Ovary (tissue), 10 donors: ENCODE measurements at regions of chr3 and their contacts with region 1.

Region 1: DNA sequence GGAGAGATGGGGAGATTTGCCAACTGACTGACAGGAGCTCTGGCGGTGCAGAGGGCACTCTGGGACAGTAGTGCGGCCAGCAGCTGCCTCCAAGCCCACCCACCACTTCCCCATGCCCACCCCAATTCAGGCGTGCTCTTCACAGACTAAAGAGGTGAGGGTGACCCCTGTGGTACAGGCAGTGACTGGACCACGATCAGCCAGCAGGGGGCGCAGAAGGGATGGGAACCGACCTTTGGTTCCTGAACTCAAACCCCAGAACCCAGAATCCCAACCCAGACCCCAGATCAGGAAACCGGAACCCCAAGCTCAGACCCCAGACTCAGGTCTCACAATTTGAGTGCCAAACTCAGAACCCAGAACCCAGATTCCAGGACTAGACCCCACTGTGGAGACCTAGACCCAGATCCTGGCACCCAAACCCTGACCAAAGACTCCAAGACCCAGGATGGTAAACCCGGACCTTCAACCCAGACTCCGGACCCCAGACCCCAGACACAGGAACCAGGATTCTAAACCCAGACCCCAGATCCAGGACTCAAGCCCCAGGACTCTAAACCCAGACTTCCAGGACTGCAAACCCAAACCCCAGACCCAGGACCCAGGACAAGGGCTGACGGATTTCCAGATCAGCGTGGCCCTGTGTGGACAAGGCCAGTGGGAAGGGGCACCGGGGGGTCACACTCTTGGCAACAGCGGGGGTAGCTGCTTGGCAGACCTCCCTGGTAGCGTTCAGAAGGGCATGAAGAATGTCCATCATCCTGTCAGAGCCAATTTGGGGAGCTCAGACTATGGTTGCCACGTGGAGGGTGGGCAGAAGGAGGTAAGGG is 3.7 kb upstream of the MYL3 start:
- DNase-seq: peak; percentile 82 to 93 (median 90)
- H3K4me3 ChIP-seq: no peak overlapping the region
- H3K27ac ChIP-seq: peak overlapping the region; percentile 66 to 73
- H3K4me1 ChIP-seq: peaks cover 31% of the 10 kb centered on the region
- H3K27me3 ChIP-seq: no peaks in the 10 kb centered on the region
- CTCF ChIP-seq: peak; percentile 81 to 91 (median 85)
- EP300 ChIP-seq: no peak
- POLR2A ChIP-seq: no peak

Region 2: GRCh38 chr3:46895204-46895660 is 28.3 kb after region 1 on chr3:
- intact Hi-C with region 1: loop called in 2 of 4 experiments (anchors 1 to 5 kb)
- DNase-seq: peak; percentile 76 to 89 (median 85)
- H3K4me3 ChIP-seq: no peak overlapping the region
- H3K27ac ChIP-seq: no peak overlapping the region
- H3K4me1 ChIP-seq: peaks cover 7% of the 10 kb centered on the region
- H3K27me3 ChIP-seq: no peaks in the 10 kb centered on the region
- CTCF ChIP-seq: peak; percentile 74 to 94 (median 92)
- EP300 ChIP-seq: no peak
- POLR2A ChIP-seq: no peak

Region 3: DNA sequence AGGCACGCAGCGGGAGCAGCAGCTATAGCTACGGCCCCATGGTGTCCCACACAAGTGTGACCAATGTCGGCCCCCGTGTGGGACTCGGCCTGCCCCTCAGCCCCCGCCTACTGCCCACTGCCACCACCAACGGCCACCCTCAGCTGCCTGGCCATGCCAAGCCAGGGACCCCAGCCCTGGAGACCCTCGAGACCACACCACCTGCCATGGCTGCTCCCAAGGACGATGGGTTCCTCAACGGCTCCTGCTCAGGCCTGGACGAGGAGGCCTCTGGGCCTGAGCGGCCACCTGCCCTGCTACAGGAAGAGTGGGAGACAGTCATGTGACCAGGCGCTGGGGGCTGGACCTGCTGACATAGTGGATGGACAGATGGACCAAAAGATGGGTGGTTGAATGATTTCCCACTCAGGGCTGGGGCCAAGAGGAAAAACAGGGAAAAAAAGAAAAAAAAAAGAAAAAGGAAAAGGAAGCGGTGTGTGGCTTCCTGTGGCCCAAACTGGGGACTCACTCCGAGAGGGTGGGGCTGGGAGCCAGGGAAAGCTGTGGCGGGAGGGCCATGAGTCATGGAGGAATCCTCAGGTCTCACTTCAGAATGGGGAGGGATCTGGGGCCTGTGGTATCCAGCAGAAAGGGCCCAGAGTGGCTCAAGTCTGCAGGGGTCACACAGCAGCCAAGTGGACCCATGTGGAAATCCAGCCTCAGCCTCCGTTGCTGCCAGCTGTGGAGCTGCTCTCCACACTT is 36.6 kb after region 1 on chr3:
- intact Hi-C with region 1: loop called in 2 of 4 experiments (anchors 5 kb)
- DNase-seq: peak in 2 of 5 donors; percentile 25 to 36
- H3K4me3 ChIP-seq: no peak overlapping the region
- H3K27ac ChIP-seq: no peak overlapping the region
- H3K4me1 ChIP-seq: peaks cover 5% of the 10 kb centered on the region
- H3K27me3 ChIP-seq: no peaks in the 10 kb centered on the region
- CTCF ChIP-seq: no peak
- EP300 ChIP-seq: no peak
- POLR2A ChIP-seq: no peak

Region 4: DNA sequence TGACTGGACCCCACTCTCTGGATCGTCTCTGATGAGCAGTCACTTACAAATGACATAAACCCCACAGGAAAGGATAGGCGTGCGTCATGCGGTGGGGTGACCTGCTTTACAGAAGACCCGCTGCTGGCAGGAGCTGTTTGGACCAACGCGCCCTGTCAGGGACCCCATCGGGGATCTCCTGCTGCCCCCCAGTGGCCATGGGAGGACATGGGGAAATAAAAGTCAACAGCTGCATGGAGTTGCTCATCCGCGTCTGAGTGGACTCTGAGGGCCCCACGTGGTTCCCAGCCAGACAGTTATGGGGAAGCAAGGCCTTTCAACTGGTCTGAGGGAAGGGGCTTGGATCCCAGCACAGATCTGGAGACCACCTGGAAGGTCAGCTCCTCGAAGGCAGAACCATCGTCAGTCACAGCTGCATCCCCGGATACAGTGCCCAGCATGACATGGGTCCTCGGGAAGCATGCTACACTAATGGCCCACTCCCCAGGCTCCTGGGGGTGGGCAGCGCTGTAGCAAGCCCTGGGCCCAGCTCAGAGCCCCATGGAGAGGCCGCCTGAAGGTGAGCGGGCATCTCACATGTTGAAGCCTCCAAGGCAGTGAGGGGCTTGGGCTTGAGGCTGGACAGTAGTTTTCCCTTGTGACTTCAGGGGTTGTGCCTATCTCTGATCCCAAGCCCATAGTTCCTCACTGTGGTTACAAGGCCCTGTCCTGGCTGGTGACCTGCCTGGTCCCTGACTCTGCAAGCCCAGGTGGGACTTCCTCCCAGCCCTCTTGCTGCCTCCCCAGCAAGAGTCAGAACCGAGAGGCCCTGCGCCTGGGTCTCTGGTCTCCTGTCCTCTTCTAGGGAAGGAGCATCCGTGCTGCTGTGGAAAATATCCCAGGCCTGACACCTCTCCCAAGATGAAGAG is 42.9 kb after region 1 on chr3:
- intact Hi-C with region 1: loop called in 2 of 4 experiments (anchors 5 kb)
- DNase-seq: peak; percentile 82 to 91 (median 89)
- H3K4me3 ChIP-seq: no peak overlapping the region
- H3K27ac ChIP-seq: no peak overlapping the region
- H3K4me1 ChIP-seq: peaks cover 15% of the 10 kb centered on the region
- H3K27me3 ChIP-seq: no peaks in the 10 kb centered on the region
- CTCF ChIP-seq: peak; percentile 82 to 87 (median 83)
- EP300 ChIP-seq: no peak
- POLR2A ChIP-seq: no peak

Region 5: GRCh38 chr3:46923559-46924350 is 56.8 kb after region 1 on chr3:
- intact Hi-C with region 1: no loop called
- DNase-seq: peak in 1 of 5 donors; percentile 51
- H3K4me3 ChIP-seq: no peak overlapping the region
- H3K27ac ChIP-seq: peak overlapping the region in 1 of 2 donors; percentile 38
- H3K4me1 ChIP-seq: no peaks in the 10 kb centered on the region
- H3K27me3 ChIP-seq: no peaks in the 10 kb centered on the region
- CTCF ChIP-seq: peak in 2 of 3 donors; percentile 32 to 38
- EP300 ChIP-seq: no peak
- POLR2A ChIP-seq: no peak